Activated naive CD4-positive, alpha-beta T cell treated with anti-CD3 and anti-CD28 coated beads for 36 hours (primary cell): ENCODE measurements at regions of chr7 and their contacts with region 1.

Region 1: GRCh38 chr7:47361746-47362215 is 220.1 kb downstream of the TNS3 start:
- DNase-seq: peak; percentile 43
- H3K4me3 Mint-ChIP-seq: no peak overlapping the region
- H3K27ac Mint-ChIP-seq: no peak overlapping the region
- H3K4me1 Mint-ChIP-seq: peaks cover 2% of the 10 kb centered on the region
- H3K27me3 Mint-ChIP-seq: no peaks in the 10 kb centered on the region

Region 2: DNA sequence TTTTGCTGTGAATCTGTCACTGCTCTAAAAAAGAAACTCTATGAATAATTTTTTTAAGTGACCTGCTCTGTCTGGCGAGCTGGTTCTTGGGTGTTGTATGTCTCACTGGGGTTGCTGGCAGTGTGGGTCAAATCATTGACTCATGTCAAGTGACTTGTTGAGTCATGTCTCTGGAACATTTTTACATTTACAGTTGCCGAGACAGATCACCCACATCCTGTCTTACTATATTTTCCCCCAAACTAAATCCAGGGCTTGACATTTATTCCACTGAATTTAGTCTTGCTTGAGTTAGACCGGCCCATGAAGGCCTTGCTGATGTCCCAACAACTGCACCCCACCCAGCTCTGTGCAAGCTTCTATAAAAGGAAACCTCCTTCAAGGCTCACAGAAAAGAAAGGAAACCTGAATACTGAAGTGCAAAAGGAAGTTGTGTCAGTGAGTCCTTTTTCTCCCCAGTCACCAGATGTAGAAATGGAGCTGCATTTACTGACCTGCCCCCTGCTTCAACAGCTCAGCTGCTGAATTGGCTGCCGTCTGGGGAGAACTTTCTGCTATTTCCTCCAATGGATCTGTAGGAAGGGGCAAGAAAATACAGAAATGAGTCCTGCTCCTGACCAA is 70.2 kb before region 1 on chr7:
- CTCF ChIA-PET with region 1: no interaction called
- intact Hi-C with region 1: loop called (anchors 5 kb)
- DNase-seq: peak; percentile 35
- H3K4me3 Mint-ChIP-seq: no peak overlapping the region
- H3K27ac Mint-ChIP-seq: peak overlapping the region; percentile 38
- H3K4me1 Mint-ChIP-seq: peaks cover 5% of the 10 kb centered on the region
- H3K27me3 Mint-ChIP-seq: no peaks in the 10 kb centered on the region

Region 3: GRCh38 chr7:48781783-48782182 is 1420.0 kb after region 1 on chr7:
- CTCF ChIA-PET with region 1: no interaction called
- intact Hi-C with region 1: no loop called
- DNase-seq: no peak
- H3K4me3 Mint-ChIP-seq: no peak overlapping the region
- H3K27ac Mint-ChIP-seq: no peak overlapping the region
- H3K4me1 Mint-ChIP-seq: no peaks in the 10 kb centered on the region
- H3K27me3 Mint-ChIP-seq: no peaks in the 10 kb centered on the region